ENCODE measurements at regions of chr2 and their contacts with region 1.

Region 1: DNA sequence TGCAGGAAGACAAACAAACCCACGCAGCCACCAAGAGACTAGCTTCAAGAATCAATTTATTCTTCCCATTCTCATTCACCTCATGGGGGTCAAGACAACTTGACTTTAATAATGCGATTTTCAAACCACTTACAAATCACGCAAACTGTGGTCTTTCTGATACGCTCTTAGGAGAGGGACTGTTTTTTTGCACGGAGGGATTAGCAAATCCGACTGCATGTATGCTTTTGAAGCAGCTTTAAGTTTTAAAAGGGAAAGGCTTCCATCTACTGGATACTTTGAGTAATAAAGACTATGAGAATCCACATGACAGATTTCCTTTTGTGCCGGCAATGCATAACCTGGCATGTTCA is 322.9 kb upstream of the KCNJ3 start:
- DNase-seq: peak; percentile 56
- ATAC-seq: peak; percentile 80
- H3K4me3 ChIP-seq: no peak overlapping the region
- H3K27ac ChIP-seq: no peak overlapping the region
- H3K4me1 ChIP-seq: no peaks in the 10 kb centered on the region
- H3K27me3 ChIP-seq: no peaks in the 10 kb centered on the region
- CTCF ChIP-seq: peak; percentile 25 to 58 (median 48); a peak in 4 of 6 replicates
- POLR2A ChIP-seq: no peak
- RAD21 ChIP-seq: peak; percentile 74

Region 2: GRCh38 chr2:152861349-152861942 is 1514.1 kb before region 1 on chr2:
- CTCF ChIA-PET with region 1: interaction called, 5 read pairs
- POLR2A ChIA-PET with region 1: no interaction called
- RAD21 ChIA-PET with region 1: no interaction called
- intact Hi-C with region 1: loop called (anchors 10 kb)
- DNase-seq: peak; percentile 46
- ATAC-seq: peak; percentile 93
- H3K4me3 ChIP-seq: no peak overlapping the region
- H3K27ac ChIP-seq: no peak overlapping the region
- H3K4me1 ChIP-seq: no peaks in the 10 kb centered on the region
- H3K27me3 ChIP-seq: no peaks in the 10 kb centered on the region
- CTCF ChIP-seq: peak; percentile 35 to 86 (median 82); a peak in 5 of 6 replicates
- POLR2A ChIP-seq: no peak
- RAD21 ChIP-seq: peak; percentile 48

Region 3: GRCh38 chr2:153163058-153163457 is 1212.5 kb before region 1 on chr2:
- CTCF ChIA-PET with region 1: no interaction called
- POLR2A ChIA-PET with region 1: no interaction called
- RAD21 ChIA-PET with region 1: no interaction called
- intact Hi-C with region 1: loop called (anchors 1 kb)
- DNase-seq: peak; percentile 53
- ATAC-seq: peak; percentile 64
- H3K4me3 ChIP-seq: no peak overlapping the region
- H3K27ac ChIP-seq: no peak overlapping the region
- H3K4me1 ChIP-seq: peaks cover 3 to 7% of the 10 kb centered on the region in 2 experiments; a peak in 1 of 4 replicates
- H3K27me3 ChIP-seq: peaks cover 5% of the 10 kb centered on the region; the same call in 1 of the 2 replicates
- CTCF ChIP-seq: peak; percentile 62 to 74 (median 70); a peak in 5 of 6 replicates
- POLR2A ChIP-seq: no peak
- RAD21 ChIP-seq: peak; percentile 81

Region 4: DNA sequence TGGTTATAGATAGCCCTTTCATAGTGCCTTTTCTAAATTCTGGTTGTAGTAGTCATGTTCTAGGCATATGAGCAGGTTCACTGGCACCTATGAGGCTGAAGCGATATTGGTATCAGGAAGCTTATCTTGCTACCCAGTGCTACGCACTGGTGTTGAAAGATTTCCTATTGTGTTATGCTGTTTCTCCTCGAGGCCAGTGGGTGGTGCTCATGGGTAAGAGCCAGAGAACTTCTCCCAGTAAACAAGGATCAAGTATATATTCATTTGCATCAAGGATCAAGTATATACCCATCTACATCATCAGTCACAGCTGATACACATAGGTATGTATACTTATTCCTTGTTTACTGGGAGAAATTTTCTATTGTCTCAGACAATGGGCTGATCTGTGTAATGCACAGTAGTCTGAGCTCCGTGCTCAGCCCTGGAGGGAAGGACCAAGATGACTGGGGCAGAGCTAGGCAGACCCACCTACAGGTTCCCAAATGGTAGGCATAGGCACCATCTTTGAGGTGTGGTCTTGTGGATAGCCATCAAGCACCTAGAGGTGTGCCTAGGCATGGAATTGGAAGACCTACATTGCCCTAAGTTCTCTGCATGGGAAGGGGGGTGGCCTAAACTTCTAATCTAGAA is 605.1 kb before region 1 on chr2:
- CTCF ChIA-PET with region 1: interaction called, 6 read pairs
- POLR2A ChIA-PET with region 1: no interaction called
- RAD21 ChIA-PET with region 1: no interaction called
- intact Hi-C with region 1: loop called (anchors 5 kb)
- DNase-seq: peak; percentile 2
- ATAC-seq: peak; percentile 87
- H3K4me3 ChIP-seq: no peak overlapping the region
- H3K27ac ChIP-seq: no peak overlapping the region
- H3K4me1 ChIP-seq: no peaks in the 10 kb centered on the region
- H3K27me3 ChIP-seq: no peaks in the 10 kb centered on the region
- CTCF ChIP-seq: peak; percentile 12 to 55 (median 48); a peak in 4 of 6 replicates
- POLR2A ChIP-seq: no peak
- RAD21 ChIP-seq: peak; percentile 49

Region 5: GRCh38 chr2:153871231-153872221 is 504.0 kb before region 1 on chr2 and contains the start of gene GALNT13:
- CTCF ChIA-PET with region 1: interaction called, 5 read pairs
- POLR2A ChIA-PET with region 1: no interaction called
- RAD21 ChIA-PET with region 1: no interaction called
- intact Hi-C with region 1: loop called (anchors 5 kb)
- DNase-seq: no peak
- ATAC-seq: no peak
- H3K4me3 ChIP-seq: no peak within 1 kb of the TSS
- H3K27ac ChIP-seq: no peak within 1 kb of the TSS
- H3K4me1 ChIP-seq: no peaks in the 10 kb centered on the region
- H3K27me3 ChIP-seq: no peaks in the 10 kb centered on the region
- CTCF ChIP-seq: no peak
- POLR2A ChIP-seq: no peak
- RAD21 ChIP-seq: no peak
- total RNA-seq, gene GALNT13: 0.44 TPM

Region 6: DNA sequence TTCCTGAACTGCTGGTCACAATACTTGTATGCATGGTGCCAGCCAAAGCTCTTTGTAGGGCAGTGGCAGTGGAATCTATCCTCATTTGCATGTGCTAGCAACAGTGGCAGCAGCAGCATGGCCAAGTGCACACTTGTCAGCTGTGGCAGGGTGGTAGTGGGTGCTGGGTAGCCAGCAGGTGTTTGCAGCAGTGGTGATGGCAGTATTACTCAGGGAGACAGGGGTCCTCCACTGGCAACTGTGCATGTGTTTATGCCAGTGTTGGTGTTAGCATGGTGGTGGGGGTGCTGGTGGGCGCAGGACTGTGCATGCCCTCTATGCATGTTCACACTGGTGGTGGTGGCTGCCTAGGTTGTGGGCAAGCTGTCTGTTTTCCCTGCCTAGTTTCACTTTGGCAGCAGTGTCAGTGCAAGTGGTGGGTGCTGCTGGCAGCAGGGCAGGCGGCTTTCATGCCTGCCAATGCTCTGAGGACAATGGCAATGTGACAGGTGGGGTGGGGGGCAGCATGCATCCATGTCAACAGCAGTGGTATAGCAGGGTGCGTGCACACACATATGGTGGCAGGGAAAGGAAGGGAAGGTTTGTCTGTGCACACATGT is 462.7 kb before region 1 on chr2:
- CTCF ChIA-PET with region 1: no interaction called
- POLR2A ChIA-PET with region 1: no interaction called
- RAD21 ChIA-PET with region 1: no interaction called
- intact Hi-C with region 1: no loop called
- DNase-seq: no peak
- ATAC-seq: no peak
- H3K4me3 ChIP-seq: no peak overlapping the region
- H3K27ac ChIP-seq: no peak overlapping the region
- H3K4me1 ChIP-seq: no peaks in the 10 kb centered on the region
- H3K27me3 ChIP-seq: no peaks in the 10 kb centered on the region
- CTCF ChIP-seq: no peak
- POLR2A ChIP-seq: no peak
- RAD21 ChIP-seq: no peak

Region 7: GRCh38 chr2:154207288-154208047 is 168.1 kb before region 1 on chr2:
- CTCF ChIA-PET with region 1: no interaction called
- POLR2A ChIA-PET with region 1: no interaction called
- RAD21 ChIA-PET with region 1: no interaction called
- intact Hi-C with region 1: no loop called
- DNase-seq: no peak
- ATAC-seq: no peak
- H3K4me3 ChIP-seq: no peak overlapping the region
- H3K27ac ChIP-seq: no peak overlapping the region
- H3K4me1 ChIP-seq: no peaks in the 10 kb centered on the region
- H3K27me3 ChIP-seq: no peaks in the 10 kb centered on the region
- CTCF ChIP-seq: no peak
- POLR2A ChIP-seq: no peak
- RAD21 ChIP-seq: no peak

Measured in HCT116 (cell line).